Calu3 (cell line): ENCODE measurements at regions of chr2 and their contacts with region 1.

Region 1: GRCh38 chr2:231642631-231643494 is 50.2 kb downstream of the TEX44 start:
- DNase-seq: peak; percentile 92
- H3K4me3 Mint-ChIP-seq: peak overlapping the region; percentile 72
- H3K27ac Mint-ChIP-seq: peak overlapping the region; percentile 100
- H3K4me1 Mint-ChIP-seq: peaks cover 34% of the 10 kb centered on the region
- H3K27me3 Mint-ChIP-seq: no peaks in the 10 kb centered on the region
- CTCF ChIP-seq: no peak

Region 2: DNA sequence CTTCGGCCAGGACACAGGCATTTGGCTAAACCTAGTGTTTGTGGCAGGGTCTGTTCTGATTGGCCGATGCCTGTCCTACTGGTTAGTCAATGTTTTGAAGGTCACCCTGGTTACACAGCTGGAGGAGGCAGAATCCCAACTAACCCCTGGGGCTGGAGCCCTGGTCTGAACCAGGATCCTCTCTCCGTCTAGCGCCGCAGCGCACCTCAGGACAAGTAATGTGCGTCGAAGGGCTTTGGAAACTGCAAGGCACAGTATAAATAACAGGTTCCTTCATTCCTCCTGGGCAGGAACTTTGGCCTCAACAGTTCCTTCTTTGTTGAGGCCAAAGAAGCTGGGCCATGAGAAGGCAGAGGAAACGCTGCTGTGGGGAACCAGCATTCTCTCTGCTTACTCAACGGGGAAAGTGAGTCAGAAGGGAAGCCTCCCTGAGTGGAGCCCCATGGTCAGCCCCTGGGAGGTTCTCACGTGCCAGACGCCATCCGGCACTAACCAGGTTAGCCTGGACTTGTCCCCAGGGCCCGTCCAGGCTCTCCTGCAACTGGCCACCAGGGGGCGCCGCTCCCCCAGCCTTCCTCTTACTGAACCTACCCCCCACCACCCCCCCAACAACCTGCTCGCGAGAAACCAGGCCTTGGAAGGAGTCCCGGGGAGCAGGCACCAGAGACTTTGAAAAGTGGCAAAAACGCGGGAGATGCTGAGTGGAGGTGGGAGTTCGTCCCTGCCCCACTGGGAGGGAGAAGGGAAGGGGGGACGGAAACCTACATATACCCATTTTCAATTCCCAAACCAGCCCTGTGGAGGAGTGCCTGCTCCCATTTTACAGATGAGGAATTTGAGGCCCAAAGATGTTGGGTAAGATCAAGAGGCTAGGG is 30.4 kb before region 1 on chr2:
- CTCF ChIA-PET with region 1: interaction called, 6 read pairs
- intact Hi-C with region 1: loop called (anchors 1 kb)
- DNase-seq: peak; percentile 95
- H3K4me3 Mint-ChIP-seq: peak overlapping the region; percentile 21
- H3K27ac Mint-ChIP-seq: peak overlapping the region; percentile 36
- H3K4me1 Mint-ChIP-seq: peaks cover 61% of the 10 kb centered on the region
- H3K27me3 Mint-ChIP-seq: no peaks in the 10 kb centered on the region
- CTCF ChIP-seq: peak; percentile 95

Region 3: GRCh38 chr2:231655897-231656296 is 13.0 kb after region 1 on chr2:
- CTCF ChIA-PET with region 1: no interaction called
- intact Hi-C with region 1: no loop called
- DNase-seq: no peak
- H3K4me3 Mint-ChIP-seq: no peak overlapping the region
- H3K27ac Mint-ChIP-seq: no peak overlapping the region
- H3K4me1 Mint-ChIP-seq: no peaks in the 10 kb centered on the region
- H3K27me3 Mint-ChIP-seq: no peaks in the 10 kb centered on the region
- CTCF ChIP-seq: no peak

Region 4: GRCh38 chr2:231883468-231883881 is 240.6 kb after region 1 on chr2:
- CTCF ChIA-PET with region 1: no interaction called
- intact Hi-C with region 1: no loop called
- DNase-seq: no peak
- H3K4me3 Mint-ChIP-seq: no peak overlapping the region
- H3K27ac Mint-ChIP-seq: no peak overlapping the region
- H3K4me1 Mint-ChIP-seq: no peaks in the 10 kb centered on the region
- H3K27me3 Mint-ChIP-seq: peaks cover 53% of the 10 kb centered on the region
- CTCF ChIP-seq: no peak